ENCODE measurements at regions of chr2 and their contacts with region 1.

Region 1: DNA sequence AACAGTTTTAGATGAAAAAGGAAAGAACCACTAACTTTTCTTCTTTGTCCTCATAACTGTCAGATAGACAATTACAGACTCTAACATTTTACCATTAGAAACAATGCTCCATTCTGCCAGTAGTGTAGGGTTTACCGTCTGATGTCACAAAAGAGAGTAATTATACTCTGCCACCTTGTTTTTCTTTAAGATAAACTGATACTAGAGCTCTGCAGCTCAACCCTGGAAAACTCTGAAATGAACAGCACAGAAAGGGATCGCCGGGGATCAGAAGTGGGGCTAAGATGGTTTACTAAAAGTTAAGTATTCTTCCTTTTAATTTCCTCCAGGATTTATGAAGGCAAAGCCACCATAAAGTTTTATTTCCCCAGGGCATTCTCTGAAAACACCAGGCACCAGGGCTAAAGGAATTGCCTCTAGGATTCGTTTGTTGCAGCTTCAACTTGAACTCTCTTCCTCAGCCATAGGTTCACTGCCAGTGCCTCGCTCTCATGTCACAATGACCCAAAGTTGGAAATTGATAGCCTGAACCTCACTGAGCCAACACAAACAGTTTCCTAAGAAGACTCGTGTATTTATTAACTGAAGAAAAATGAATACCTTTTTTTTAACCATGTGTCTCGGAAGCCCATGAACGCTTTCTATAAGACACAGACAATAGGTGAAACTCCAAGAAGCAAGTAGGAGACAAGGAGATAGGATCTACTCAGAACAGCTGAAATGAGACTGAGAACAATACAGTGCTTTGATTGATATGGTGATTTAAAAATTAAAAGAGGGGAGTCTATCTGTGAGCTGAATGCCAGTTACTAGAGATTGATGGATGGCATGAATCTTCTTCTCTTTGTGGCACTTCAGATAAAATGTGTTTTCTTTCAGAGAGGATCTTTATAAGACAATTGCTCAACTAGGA is 121.5 kb upstream of the SPATS2L start:
- DNase-seq: no peak
- ATAC-seq: no peak
- H3K4me3 ChIP-seq: no peak overlapping the region
- H3K4me3 Mint-ChIP-seq: no peak overlapping the region
- H3K27ac ChIP-seq: no peak overlapping the region
- H3K27ac Mint-ChIP-seq: no peak overlapping the region
- H3K4me1 ChIP-seq: no peaks in the 10 kb centered on the region
- H3K4me1 Mint-ChIP-seq: no peaks in the 10 kb centered on the region
- H3K27me3 ChIP-seq: peaks cover 0 to 8% of the 10 kb centered on the region in 2 experiments
- H3K27me3 Mint-ChIP-seq: peaks cover 34% of the 10 kb centered on the region
- CTCF ChIP-seq: no peak

Region 2: GRCh38 chr2:200121931-200122330 is 63.0 kb before region 1 on chr2:
- CTCF ChIA-PET with region 1: no interaction called
- POLR2A ChIA-PET with region 1: no interaction called
- intact Hi-C with region 1: loop called in 1 of 2 experiments (anchors 5 kb)
- DNase-seq: no peak
- ATAC-seq: no peak
- H3K4me3 ChIP-seq: no peak overlapping the region
- H3K4me3 Mint-ChIP-seq: no peak overlapping the region
- H3K27ac ChIP-seq: no peak overlapping the region
- H3K27ac Mint-ChIP-seq: no peak overlapping the region
- H3K4me1 ChIP-seq: no peaks in the 10 kb centered on the region
- H3K4me1 Mint-ChIP-seq: no peaks in the 10 kb centered on the region
- H3K27me3 ChIP-seq: peaks cover 0 to 3% of the 10 kb centered on the region in 2 experiments
- H3K27me3 Mint-ChIP-seq: peaks cover 22% of the 10 kb centered on the region
- CTCF ChIP-seq: no peak

Region 3: GRCh38 chr2:200212862-200213425 is 28.0 kb after region 1 on chr2:
- CTCF ChIA-PET with region 1: no interaction called
- POLR2A ChIA-PET with region 1: no interaction called
- intact Hi-C with region 1: no loop called
- DNase-seq: no peak
- ATAC-seq: no peak
- H3K4me3 ChIP-seq: no peak overlapping the region
- H3K4me3 Mint-ChIP-seq: no peak overlapping the region
- H3K27ac ChIP-seq: no peak overlapping the region
- H3K27ac Mint-ChIP-seq: no peak overlapping the region
- H3K4me1 ChIP-seq: no peaks in the 10 kb centered on the region
- H3K4me1 Mint-ChIP-seq: no peaks in the 10 kb centered on the region
- H3K27me3 ChIP-seq: peaks cover 2 to 7% of the 10 kb centered on the region in 2 experiments
- H3K27me3 Mint-ChIP-seq: peaks cover 36% of the 10 kb centered on the region
- CTCF ChIP-seq: no peak